ENCODE measurements at regions of chr2 and their contacts with region 1.

Region 1: GRCh38 chr2:227238238-227239237 is 74.1 kb downstream of the COL4A3 start:
- DNase-seq: peak; percentile 45
- H3K4me3 ChIP-seq: no peak overlapping the region; a peak in 1 of 4 replicates
- H3K27ac ChIP-seq: no peak overlapping the region
- H3K4me1 ChIP-seq: no peaks in the 10 kb centered on the region
- H3K27me3 ChIP-seq: peaks cover 29% of the 10 kb centered on the region
- CTCF ChIP-seq: peak; percentile 99
- EP300 ChIP-seq: no peak
- RAD21 ChIP-seq: peak; percentile 86

Region 2: GRCh38 chr2:226916669-226917068 is 321.9 kb before region 1 on chr2:
- CTCF ChIA-PET with region 1: no interaction called
- POLR2A ChIA-PET with region 1: no interaction called
- DNase-seq: no peak
- H3K4me3 ChIP-seq: no peak overlapping the region
- H3K27ac ChIP-seq: no peak overlapping the region
- H3K4me1 ChIP-seq: no peaks in the 10 kb centered on the region
- H3K27me3 ChIP-seq: no peaks in the 10 kb centered on the region
- CTCF ChIP-seq: no peak
- EP300 ChIP-seq: no peak
- RAD21 ChIP-seq: no peak

Region 3: GRCh38 chr2:227125506-227125905 is 113.0 kb before region 1 on chr2:
- CTCF ChIA-PET with region 1: interaction called, 156 read pairs
- POLR2A ChIA-PET with region 1: interaction called, 3 read pairs
- DNase-seq: peak; percentile 7
- H3K4me3 ChIP-seq: no peak overlapping the region
- H3K27ac ChIP-seq: no peak overlapping the region
- H3K4me1 ChIP-seq: no peaks in the 10 kb centered on the region; a peak in 1 of 4 replicates
- H3K27me3 ChIP-seq: peaks cover 12% of the 10 kb centered on the region; the same call in 1 of the 2 replicates
- CTCF ChIP-seq: peak; percentile 29; the same call in 1 of the 2 replicates
- EP300 ChIP-seq: no peak
- RAD21 ChIP-seq: peak; percentile 22; the same call in 1 of the 2 replicates

Region 4: DNA sequence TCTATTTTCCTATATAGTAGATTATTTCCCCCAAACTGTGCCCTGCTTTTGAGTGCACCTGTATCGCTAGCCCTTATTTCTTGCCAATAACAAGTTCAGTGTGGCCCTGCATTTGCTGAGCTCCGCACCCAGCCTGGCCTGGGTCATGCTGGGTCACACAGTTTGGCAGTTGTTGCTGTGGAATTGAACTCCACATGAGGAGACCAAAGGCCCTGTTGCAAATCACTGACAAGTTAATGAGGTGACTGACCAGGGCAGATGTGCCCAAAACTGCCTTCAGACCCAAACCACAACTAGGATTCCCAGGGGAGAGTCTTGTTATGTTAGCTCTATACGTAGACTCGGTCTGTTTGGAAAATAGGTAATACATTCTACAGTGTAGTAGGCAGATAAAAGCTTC is 105.6 kb before region 1 on chr2:
- CTCF ChIA-PET with region 1: interaction called, 156 read pairs
- POLR2A ChIA-PET with region 1: interaction called, 3 read pairs
- DNase-seq: no peak
- H3K4me3 ChIP-seq: no peak overlapping the region
- H3K27ac ChIP-seq: no peak overlapping the region
- H3K4me1 ChIP-seq: no peaks in the 10 kb centered on the region
- H3K27me3 ChIP-seq: no peaks in the 10 kb centered on the region
- CTCF ChIP-seq: no peak
- EP300 ChIP-seq: no peak
- RAD21 ChIP-seq: no peak

Region 5: DNA sequence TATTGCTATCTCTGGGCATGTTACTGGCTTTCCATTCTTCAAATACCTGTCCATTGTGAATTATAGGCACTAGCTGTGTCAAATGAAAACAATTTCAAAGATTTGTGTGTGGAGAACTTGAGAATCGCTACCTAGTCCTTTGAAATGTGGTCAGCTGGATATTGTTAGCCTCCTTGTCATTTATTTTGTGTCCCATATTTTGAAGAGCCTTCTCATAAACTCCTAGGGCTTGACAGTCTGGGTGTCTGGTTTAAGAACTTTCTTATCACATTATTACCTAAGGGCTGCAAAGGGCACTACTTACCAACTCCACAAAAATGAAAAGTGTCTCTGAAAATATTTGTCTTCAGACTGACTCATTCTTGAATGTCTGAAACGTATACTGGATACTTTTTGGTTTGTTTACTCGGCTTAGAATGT is 23.9 kb before region 1 on chr2:
- CTCF ChIA-PET with region 1: interaction called, 14 read pairs
- POLR2A ChIA-PET with region 1: no interaction called
- DNase-seq: no peak
- H3K4me3 ChIP-seq: no peak overlapping the region
- H3K27ac ChIP-seq: no peak overlapping the region
- H3K4me1 ChIP-seq: no peaks in the 10 kb centered on the region
- H3K27me3 ChIP-seq: no peaks in the 10 kb centered on the region
- CTCF ChIP-seq: no peak
- EP300 ChIP-seq: no peak
- RAD21 ChIP-seq: no peak

Region 6: DNA sequence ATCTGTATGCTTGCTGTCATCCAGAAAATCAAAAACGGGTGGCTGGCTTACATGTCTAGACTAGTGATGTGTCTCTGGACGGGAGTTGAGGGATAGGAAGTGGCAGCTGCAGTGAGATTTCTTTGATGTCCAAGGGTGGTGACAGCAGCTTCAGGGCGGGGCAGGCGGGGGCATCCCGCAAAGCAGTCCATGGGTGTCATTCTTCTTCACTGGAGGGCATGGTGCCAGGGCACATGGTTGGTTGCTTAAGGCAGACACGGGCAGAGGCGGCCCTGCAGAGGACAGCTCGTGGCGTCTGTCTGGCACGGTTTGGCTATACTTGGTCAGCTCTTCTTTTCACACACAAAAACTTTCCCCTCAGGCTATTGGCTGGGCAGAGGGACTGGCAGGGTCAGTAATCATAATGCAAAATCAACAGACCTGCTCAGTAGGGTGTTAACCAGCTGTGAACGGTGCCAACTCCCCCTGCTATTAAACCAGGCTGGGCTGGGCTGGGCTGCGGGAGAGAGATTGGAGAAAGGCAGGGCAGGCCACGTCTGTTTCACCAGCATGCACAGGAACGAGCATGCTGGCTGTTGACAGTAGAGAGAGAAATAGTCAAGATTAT is 10.4 kb before region 1 on chr2:
- CTCF ChIA-PET with region 1: interaction called, 28 read pairs
- POLR2A ChIA-PET with region 1: no interaction called
- DNase-seq: peak; percentile 69
- H3K4me3 ChIP-seq: no peak overlapping the region; a peak in 1 of 4 replicates
- H3K27ac ChIP-seq: peak overlapping the region in 1 of 2 experiments; percentile 50; a peak in 1 of 4 replicates
- H3K4me1 ChIP-seq: peaks cover 0 to 13% of the 10 kb centered on the region in 2 experiments; a peak in 2 of 4 replicates
- H3K27me3 ChIP-seq: no peaks in the 10 kb centered on the region; the same call in 1 of the 2 replicates
- CTCF ChIP-seq: no peak
- EP300 ChIP-seq: no peak
- RAD21 ChIP-seq: no peak

Region 7: GRCh38 chr2:227248876-227249275 is 10.3 kb after region 1 on chr2:
- CTCF ChIA-PET with region 1: interaction called, 37 read pairs
- POLR2A ChIA-PET with region 1: no interaction called
- DNase-seq: no peak
- H3K4me3 ChIP-seq: no peak overlapping the region
- H3K27ac ChIP-seq: no peak overlapping the region
- H3K4me1 ChIP-seq: no peaks in the 10 kb centered on the region
- H3K27me3 ChIP-seq: no peaks in the 10 kb centered on the region
- CTCF ChIP-seq: no peak
- EP300 ChIP-seq: no peak
- RAD21 ChIP-seq: no peak

Region 8: DNA sequence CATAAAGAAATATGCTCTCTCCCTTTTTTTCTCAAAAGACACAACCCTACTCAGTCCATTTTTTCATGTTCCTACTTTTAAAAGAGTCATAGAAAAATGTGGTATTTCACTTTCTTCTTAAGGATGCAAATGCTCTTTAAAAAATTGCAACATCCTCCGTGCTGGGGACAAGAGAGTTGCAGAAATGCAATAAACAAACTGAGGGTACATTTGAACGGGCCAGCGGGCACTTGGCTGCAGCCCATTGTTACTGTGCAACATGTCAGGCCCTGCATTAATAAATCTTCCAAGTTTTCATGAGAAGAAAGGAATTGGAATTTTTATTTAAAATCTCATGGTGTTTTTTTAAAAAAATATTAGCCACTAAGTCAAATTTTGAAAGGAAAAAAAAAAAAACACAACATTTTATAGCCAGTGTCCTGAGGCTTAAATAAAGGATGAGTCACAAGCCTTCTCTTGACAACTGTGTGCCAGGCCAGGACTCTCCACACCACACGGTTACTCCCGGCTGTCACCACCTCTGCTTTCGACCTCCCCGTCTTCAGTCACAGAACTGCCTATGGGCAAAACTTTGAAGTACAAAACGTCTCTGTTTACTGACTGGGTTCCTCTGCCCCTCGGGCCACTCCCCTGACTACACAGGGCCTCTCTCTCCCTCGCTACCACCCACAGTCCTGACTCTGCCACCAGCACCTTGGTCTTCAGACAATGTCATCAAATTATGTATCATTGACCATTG is 29.0 kb after region 1 on chr2:
- CTCF ChIA-PET with region 1: interaction called, 14 read pairs
- POLR2A ChIA-PET with region 1: no interaction called
- DNase-seq: no peak
- H3K4me3 ChIP-seq: no peak overlapping the region
- H3K27ac ChIP-seq: no peak overlapping the region
- H3K4me1 ChIP-seq: no peaks in the 10 kb centered on the region
- H3K27me3 ChIP-seq: no peaks in the 10 kb centered on the region
- CTCF ChIP-seq: no peak
- EP300 ChIP-seq: no peak
- RAD21 ChIP-seq: no peak

Measured in SK-N-SH (cell line).